PC-9 (cell line): ENCODE measurements at regions of chr1 and their contacts with region 1.

Region 1: GRCh38 chr1:208177656-208178055 is 66.5 kb downstream of the PLXNA2 start:
- DNase-seq: peak in 1 of 2 experiments; percentile 37
- H3K4me3 ChIP-seq: no peak overlapping the region
- H3K27ac ChIP-seq: peak overlapping the region; percentile 78; the same call in 1 of the 2 replicates
- H3K4me1 ChIP-seq: peaks cover 64% of the 10 kb centered on the region
- H3K27me3 ChIP-seq: no peaks in the 10 kb centered on the region
- CTCF ChIP-seq: no peak

Region 2: DNA sequence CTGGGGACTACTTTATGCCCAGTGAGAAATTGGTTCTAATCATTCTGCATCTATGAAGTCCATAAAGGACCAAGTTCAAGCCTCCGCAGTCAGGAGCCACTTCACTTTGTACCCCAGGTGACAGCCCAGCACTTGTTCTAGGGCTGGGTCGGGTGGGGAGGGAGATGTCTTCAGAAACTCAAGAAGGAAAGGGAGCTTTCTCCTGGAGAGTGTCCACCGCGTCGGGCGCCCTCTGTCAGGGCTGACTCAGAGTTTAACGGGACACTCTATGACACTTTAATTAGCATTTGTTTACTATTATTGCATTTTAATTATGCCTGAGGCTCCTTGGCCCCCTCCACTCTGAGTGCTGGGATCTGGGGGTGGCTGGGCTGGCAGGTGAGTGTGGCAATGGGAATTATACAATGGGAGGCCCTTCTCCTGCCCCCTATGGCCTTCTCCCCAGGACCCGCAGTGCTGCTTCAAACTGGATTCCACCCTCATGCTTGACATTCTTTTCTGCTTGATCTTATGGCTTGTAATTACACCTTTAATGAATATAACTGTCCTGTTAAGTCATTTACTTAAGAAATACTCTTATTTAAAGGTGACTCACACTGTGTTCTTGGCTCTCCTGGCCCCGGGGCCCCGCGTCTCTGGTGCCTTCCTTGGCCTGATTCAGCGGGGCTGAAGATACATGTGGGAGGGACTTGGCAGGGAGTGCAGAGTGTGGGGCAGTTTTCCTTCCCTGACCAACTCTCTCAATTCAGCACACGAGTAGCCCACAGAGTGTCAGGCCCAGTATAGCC is 70.0 kb before region 1 on chr1:
- CTCF ChIA-PET with region 1: no interaction called
- POLR2A ChIA-PET with region 1: no interaction called
- intact Hi-C with region 1: loop called (anchors 2 kb)
- DNase-seq: peak; percentile 81 to 96
- H3K4me3 ChIP-seq: no peak overlapping the region
- H3K27ac ChIP-seq: peak overlapping the region; percentile 73
- H3K4me1 ChIP-seq: peaks cover 66% of the 10 kb centered on the region
- H3K27me3 ChIP-seq: no peaks in the 10 kb centered on the region
- CTCF ChIP-seq: no peak; the same call in 1 of the 2 replicates

Region 3: DNA sequence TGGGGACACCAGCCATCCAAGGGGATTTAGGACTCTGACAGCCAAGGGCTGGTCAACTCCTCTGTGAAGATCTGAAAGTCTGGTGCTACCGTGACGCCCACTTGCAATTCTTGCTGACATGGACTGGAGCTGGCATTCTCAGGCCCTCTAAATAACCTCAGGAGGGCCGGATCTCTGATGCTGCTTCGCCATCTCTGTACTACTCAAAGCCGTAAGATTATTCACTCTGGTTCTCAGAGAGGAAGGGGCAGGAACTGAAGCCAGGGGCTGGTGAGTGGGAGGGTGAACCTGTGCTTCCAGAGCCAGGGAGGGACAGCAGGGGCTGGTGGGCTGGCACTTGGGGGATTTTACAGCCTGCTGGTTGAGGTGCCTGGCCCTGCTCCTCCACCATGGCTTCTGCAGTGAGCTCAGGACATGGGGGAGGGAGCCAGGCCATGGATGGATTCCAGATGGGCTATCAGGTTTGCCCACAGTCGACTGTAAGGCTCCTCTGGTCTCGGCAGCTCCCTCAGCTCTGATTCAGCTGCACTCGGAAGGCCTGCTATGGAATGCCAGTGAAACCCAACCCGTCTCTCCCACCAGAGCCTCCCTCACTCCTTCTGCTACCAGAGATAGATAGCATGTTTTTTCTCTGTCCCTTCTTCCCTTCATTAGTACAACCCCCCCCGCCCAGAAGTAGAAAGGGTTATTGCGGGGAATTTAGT is 17.9 kb before region 1 on chr1:
- CTCF ChIA-PET with region 1: no interaction called
- POLR2A ChIA-PET with region 1: no interaction called
- intact Hi-C with region 1: loop called (anchors 1 kb)
- DNase-seq: no peak
- H3K4me3 ChIP-seq: no peak overlapping the region
- H3K27ac ChIP-seq: no peak overlapping the region
- H3K4me1 ChIP-seq: peaks cover 16% of the 10 kb centered on the region
- H3K27me3 ChIP-seq: no peaks in the 10 kb centered on the region
- CTCF ChIP-seq: no peak